ENCODE measurements at regions of chr6 and their contacts with region 1.

Region 1: DNA sequence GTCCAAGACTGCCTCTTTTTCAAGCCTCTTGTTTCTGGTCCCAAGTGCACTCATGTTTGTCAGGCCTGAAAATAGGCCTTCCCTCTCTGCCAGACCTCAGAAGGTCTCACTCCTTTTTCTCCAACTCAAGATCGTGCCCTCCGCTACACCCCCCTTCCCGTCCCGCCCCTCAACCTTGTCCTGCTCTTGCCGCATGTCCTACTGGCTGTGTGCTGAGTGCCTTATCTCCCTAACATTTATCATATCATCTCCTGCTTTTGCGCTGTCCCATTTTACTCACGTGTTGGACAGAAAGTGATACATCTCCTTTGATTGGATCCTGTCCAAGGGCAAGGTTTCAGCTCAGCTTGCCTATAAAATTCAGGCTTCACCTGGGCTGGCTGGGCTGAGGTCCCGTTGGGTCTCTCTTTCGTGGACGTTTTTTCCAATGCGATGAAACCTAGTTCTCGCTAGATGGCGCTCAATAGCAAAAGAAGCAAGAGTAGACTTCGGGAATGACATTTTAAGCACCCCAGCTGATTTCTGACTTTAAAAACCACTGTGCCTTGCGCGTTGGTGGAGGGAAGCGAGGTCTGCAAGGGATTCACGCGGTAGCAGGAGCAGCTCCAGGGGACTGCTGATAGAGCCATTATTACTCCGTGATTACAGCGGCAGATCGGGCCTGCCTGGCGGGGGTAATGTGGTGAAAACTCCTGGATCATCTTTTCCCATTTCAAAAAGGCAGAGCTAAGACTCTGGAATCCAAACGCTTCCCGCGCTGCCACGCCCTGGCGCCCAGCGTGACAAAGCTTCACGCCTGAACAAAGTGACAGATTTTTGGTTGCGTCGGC is 137.6 kb downstream of the IMPG1 start:
- DNase-seq: peak; percentile 83
- ATAC-seq: peak; percentile 87
- H3K4me3 ChIP-seq: peak overlapping the region; percentile 52
- H3K27ac ChIP-seq: no peak overlapping the region
- H3K4me1 ChIP-seq: peaks cover 5% of the 10 kb centered on the region; the same call in 1 of the 2 replicates
- H3K27me3 ChIP-seq: no peaks in the 10 kb centered on the region
- CTCF ChIP-seq: peak; percentile 76

Region 2: GRCh38 chr6:75855052-75855451 is 79.8 kb before region 1 on chr6:
- CTCF ChIA-PET with region 1: interaction called, 3 read pairs
- POLR2A ChIA-PET with region 1: no interaction called
- intact Hi-C with region 1: loop called (anchors 5 kb)
- DNase-seq: peak; percentile 70
- ATAC-seq: 0 out of 2 replicates have a peak, but pooled peaks have one; percentile 32
- H3K4me3 ChIP-seq: no peak overlapping the region
- H3K27ac ChIP-seq: no peak overlapping the region
- H3K4me1 ChIP-seq: peaks cover 35% of the 10 kb centered on the region
- H3K27me3 ChIP-seq: no peaks in the 10 kb centered on the region
- CTCF ChIP-seq: peak; percentile 60; the same call in 1 of the 2 replicates

Region 3: GRCh38 chr6:75893058-75893775 is 41.6 kb before region 1 on chr6:
- CTCF ChIA-PET with region 1: interaction called, 5 read pairs
- POLR2A ChIA-PET with region 1: no interaction called
- intact Hi-C with region 1: loop called (anchors 1 kb)
- DNase-seq: peak; percentile 78
- ATAC-seq: peak; percentile 33
- H3K4me3 ChIP-seq: no peak overlapping the region
- H3K27ac ChIP-seq: no peak overlapping the region
- H3K4me1 ChIP-seq: no peaks in the 10 kb centered on the region
- H3K27me3 ChIP-seq: no peaks in the 10 kb centered on the region
- CTCF ChIP-seq: peak; percentile 70

Region 4: DNA sequence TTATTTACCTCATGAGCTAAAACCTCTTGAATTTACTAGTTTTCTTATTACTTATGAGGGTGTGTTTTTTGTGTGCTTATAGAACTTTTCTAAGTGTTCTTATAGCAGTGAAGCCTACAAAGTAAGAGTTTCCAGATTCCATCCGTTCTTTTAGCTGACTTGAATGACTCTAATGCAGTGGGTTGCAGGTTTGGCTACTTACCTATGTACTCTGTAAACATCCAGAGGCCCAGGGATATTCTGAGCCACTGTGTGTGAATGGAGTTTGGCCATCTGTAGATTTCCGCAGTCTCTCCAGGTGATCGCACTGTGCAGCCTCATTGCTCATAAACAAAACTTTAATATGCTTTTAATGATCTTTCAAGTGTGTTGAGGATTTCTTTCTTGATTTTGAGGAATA is 28.0 kb before region 1 on chr6:
- CTCF ChIA-PET with region 1: no interaction called
- POLR2A ChIA-PET with region 1: no interaction called
- intact Hi-C with region 1: no loop called
- DNase-seq: no peak
- ATAC-seq: no peak
- H3K4me3 ChIP-seq: no peak overlapping the region
- H3K27ac ChIP-seq: no peak overlapping the region
- H3K4me1 ChIP-seq: no peaks in the 10 kb centered on the region
- H3K27me3 ChIP-seq: no peaks in the 10 kb centered on the region
- CTCF ChIP-seq: no peak

Region 5: DNA sequence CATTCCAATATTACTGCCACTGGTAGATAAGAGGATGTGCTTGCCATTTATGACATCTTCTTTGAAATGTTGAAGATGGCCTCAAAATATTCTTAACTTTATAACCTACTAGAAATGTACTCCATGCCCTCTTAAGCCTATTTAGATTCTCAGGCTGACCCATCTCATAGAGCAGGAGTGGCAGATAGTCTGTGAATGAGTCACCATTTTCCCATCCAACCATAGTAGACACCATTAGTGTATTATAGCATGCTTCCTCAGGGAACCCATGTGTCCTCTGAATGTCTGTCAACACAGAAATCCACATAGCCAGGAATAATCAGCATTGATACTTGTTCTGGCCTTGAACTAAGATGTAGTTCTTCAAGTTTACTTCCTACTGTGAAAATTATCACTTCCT is 12.6 kb before region 1 on chr6:
- CTCF ChIA-PET with region 1: no interaction called
- POLR2A ChIA-PET with region 1: no interaction called
- intact Hi-C with region 1: no loop called
- DNase-seq: peak; percentile 30
- ATAC-seq: no peak
- H3K4me3 ChIP-seq: no peak overlapping the region
- H3K27ac ChIP-seq: no peak overlapping the region
- H3K4me1 ChIP-seq: no peaks in the 10 kb centered on the region
- H3K27me3 ChIP-seq: no peaks in the 10 kb centered on the region
- CTCF ChIP-seq: no peak

Region 6: DNA sequence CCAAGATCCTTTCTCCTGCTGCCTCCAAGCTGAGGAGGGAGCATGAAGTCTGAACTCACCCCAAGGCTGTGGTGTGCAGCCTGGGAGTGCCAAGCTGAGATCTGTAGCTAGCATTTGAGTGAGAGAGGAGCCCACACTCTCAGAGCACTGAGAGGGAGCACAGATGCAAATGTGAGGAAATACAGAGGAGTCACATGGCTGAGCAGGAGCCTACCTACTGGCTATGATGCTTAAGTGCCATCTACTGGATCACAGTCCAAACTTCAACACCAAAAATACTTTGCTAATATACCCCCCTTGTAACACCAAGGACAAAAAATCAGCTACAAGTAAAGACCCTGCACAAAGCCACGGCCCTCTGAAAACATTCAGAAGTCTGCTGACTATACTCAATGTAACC is 232.0 kb after region 1 on chr6:
- CTCF ChIA-PET with region 1: no interaction called
- POLR2A ChIA-PET with region 1: no interaction called
- intact Hi-C with region 1: loop called (anchors 2 kb)
- DNase-seq: peak; percentile 28
- ATAC-seq: no peak
- H3K4me3 ChIP-seq: no peak overlapping the region
- H3K27ac ChIP-seq: no peak overlapping the region
- H3K4me1 ChIP-seq: no peaks in the 10 kb centered on the region
- H3K27me3 ChIP-seq: no peaks in the 10 kb centered on the region
- CTCF ChIP-seq: peak; percentile 45

Region 7: GRCh38 chr6:76220805-76221204 is 285.9 kb after region 1 on chr6:
- CTCF ChIA-PET with region 1: no interaction called
- POLR2A ChIA-PET with region 1: no interaction called
- intact Hi-C with region 1: no loop called
- DNase-seq: no peak
- ATAC-seq: no peak
- H3K4me3 ChIP-seq: no peak overlapping the region
- H3K27ac ChIP-seq: no peak overlapping the region
- H3K4me1 ChIP-seq: no peaks in the 10 kb centered on the region
- H3K27me3 ChIP-seq: no peaks in the 10 kb centered on the region
- CTCF ChIP-seq: no peak

Region 8: DNA sequence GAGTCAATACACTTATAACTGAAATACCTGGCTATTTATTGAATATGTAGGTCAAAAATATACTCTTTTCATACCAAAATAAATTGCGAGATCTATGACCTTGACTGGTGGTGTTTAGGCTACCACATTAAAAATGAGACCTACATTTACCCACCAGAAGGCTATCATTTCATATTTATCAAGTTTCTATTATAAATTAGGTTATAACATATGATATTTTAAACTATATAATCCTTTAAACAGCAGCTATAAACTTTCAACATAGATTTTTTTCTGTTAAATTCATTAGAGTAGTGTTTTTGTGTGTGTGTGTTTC is 942.3 kb after region 1 on chr6:
- CTCF ChIA-PET with region 1: no interaction called
- POLR2A ChIA-PET with region 1: no interaction called
- intact Hi-C with region 1: loop called (anchors 1 kb)
- DNase-seq: no peak
- ATAC-seq: no peak
- H3K4me3 ChIP-seq: no peak overlapping the region
- H3K27ac ChIP-seq: no peak overlapping the region
- H3K4me1 ChIP-seq: no peaks in the 10 kb centered on the region
- H3K27me3 ChIP-seq: no peaks in the 10 kb centered on the region
- CTCF ChIP-seq: no peak

Region 9: GRCh38 chr6:77457720-77458349 is 1523.0 kb after region 1 on chr6:
- CTCF ChIA-PET with region 1: no interaction called
- POLR2A ChIA-PET with region 1: no interaction called
- intact Hi-C with region 1: loop called (anchors 1 kb)
- DNase-seq: peak; percentile 62
- ATAC-seq: peak; percentile 59; the same call in 1 of the 2 replicates
- H3K4me3 ChIP-seq: no peak overlapping the region
- H3K27ac ChIP-seq: no peak overlapping the region
- H3K4me1 ChIP-seq: peaks cover 3% of the 10 kb centered on the region
- H3K27me3 ChIP-seq: no peaks in the 10 kb centered on the region
- CTCF ChIP-seq: peak; percentile 61